BJ (cell line): ENCODE measurements at regions of chr4 and their contacts with region 1.

Region 1: GRCh38 chr4:54659313-54659712 is 1.6 kb downstream of the KIT start:
- DNase-seq: no peak
- H3K4me3 ChIP-seq: peak overlapping the region; percentile 68
- H3K27me3 ChIP-seq: peaks cover 11% of the 10 kb centered on the region
- CTCF ChIP-seq: no peak

Region 2: GRCh38 chr4:53987761-53988171 is 671.5 kb before region 1 on chr4:
- CTCF ChIA-PET with region 1: no interaction called
- POLR2A ChIA-PET with region 1: interaction called, 10 read pairs
- DNase-seq: no peak
- H3K4me3 ChIP-seq: no peak overlapping the region
- H3K27me3 ChIP-seq: no peaks in the 10 kb centered on the region
- CTCF ChIP-seq: no peak

Region 3: DNA sequence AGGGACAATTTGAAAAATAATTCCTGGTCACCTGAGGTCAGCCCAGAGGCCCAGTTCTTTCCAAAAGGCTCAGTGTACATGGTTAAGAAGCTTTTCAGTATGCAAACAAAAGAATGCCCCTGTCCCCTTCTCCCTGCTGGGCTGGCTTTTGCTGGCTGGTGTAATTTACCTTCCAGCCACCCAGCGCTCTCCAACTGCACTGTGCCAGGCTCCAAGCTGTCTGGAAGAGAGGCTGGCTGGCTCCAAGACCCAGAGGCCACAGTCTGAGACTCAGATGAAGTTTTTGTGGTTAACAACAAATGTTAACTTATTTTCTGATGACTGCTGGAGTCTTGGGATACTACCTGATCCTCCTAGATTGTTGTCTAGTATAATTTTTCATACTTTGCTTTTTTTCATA is 13.5 kb before region 1 on chr4:
- CTCF ChIA-PET with region 1: no interaction called
- POLR2A ChIA-PET with region 1: no interaction called
- DNase-seq: no peak
- H3K4me3 ChIP-seq: no peak overlapping the region
- H3K27me3 ChIP-seq: no peaks in the 10 kb centered on the region
- CTCF ChIP-seq: no peak

Region 4: GRCh38 chr4:54683162-54683561 is 23.8 kb after region 1 on chr4:
- CTCF ChIA-PET with region 1: interaction called, 4 read pairs
- POLR2A ChIA-PET with region 1: interaction called, 14 read pairs
- DNase-seq: no peak
- H3K4me3 ChIP-seq: no peak overlapping the region
- H3K27me3 ChIP-seq: no peaks in the 10 kb centered on the region
- CTCF ChIP-seq: no peak

Region 5: DNA sequence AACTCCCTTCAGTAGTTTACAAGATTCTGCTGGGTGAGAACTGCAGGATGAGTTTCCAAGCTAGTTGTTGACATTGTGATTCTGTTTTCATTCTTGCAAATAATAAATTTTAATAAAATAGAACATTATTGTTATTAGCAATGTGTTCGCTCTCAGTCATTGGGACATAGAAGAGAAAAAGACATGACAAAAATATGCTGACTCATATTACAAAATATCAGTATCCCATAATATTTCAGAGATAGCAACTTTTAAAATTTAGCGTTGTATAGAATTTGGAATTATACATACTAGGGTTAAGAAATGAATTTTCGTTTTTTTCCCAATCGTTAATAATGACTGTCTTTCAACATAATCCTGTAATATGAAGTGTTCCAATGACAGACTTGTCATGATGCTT is 43.9 kb after region 1 on chr4:
- CTCF ChIA-PET with region 1: no interaction called
- POLR2A ChIA-PET with region 1: no interaction called
- DNase-seq: no peak
- H3K4me3 ChIP-seq: no peak overlapping the region
- H3K27me3 ChIP-seq: no peaks in the 10 kb centered on the region
- CTCF ChIP-seq: no peak